Sciatic nerve (tissue), 2 donors: ENCODE measurements at regions of chr2 and their contacts with region 1.

Region 1: GRCh38 chr2:85635636-85636035 is 19.6 kb downstream of the USP39 start:
- DNase-seq: peak; percentile 10
- ATAC-seq: no peak

Region 2: DNA sequence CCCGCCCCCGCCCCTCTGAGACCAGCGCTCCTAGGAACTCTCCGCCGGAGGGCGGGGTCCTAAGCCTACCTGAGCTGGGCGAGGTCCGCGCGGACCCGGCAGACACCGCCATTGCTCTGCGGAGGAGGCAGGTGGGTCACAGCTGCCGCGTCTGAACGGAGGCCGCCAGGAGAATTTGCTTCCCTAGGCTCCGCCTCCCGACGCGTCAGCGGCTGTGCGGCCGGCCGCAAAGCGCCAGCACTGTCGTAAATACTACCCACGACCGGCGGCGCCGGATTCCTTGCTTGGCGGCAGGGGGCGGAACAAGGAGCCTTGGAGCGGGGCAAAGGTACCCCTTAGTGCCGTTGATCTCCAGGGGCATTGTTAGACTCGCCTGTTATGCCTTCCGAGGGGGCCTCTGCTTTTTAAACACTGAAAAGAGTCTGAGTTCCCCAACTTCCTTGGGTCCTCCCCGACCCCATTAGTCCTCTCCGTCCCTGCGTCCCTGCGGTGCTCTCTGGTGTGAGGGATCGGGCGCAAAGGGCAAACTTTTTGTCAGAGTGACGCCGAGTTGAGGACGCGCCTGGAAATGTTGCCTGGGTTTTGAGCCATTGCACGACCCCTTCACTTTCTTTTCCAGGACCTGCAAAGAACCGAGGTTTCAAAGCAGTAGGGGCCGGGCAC is 74.2 kb before region 1 on chr2 and contains the start of gene GGCX:
- intact Hi-C with region 1: no loop called
- DNase-seq: peak; percentile 98
- ATAC-seq: peak; percentile 97
- total RNA-seq, gene GGCX: 36.6 TPM

Region 3: DNA sequence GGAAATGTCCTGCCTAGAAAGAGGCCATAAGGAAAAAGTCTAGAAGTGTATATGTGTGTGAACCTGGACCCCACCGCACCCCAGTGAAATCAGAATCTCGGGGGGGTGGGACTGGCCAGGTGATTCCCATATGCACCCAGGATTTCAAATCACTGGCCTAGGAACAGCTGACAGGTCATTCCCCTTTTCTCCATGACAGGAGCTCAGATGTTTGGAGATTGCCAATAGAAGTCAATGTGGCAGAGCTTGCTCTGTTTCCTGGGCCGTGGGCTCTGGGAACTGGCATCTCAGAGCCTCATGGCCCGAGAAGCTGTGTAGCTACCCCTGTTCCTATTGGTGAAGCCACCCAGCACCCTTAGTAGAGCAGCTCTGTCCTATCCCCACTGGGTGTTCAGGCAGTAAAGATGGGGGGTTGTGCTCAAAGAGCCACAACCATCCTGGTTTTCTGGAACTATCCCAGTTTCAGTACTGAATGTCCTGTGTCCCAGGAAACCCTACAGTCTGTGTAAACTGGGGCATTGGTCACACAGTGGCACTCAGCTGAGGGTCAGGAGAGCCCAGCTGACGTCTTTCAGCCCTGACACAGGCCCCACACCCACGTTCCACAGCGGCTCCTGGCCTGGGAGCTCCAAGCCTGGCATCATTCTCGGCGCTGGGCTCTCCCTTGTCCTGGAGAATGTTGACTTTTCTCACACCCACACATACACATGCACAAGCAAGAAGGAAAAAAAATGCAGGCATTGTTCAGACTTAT is 77.4 kb after region 1 on chr2:
- intact Hi-C with region 1: loop called (anchors 10 kb)
- DNase-seq: no peak
- ATAC-seq: peak; percentile 70

Region 4: DNA sequence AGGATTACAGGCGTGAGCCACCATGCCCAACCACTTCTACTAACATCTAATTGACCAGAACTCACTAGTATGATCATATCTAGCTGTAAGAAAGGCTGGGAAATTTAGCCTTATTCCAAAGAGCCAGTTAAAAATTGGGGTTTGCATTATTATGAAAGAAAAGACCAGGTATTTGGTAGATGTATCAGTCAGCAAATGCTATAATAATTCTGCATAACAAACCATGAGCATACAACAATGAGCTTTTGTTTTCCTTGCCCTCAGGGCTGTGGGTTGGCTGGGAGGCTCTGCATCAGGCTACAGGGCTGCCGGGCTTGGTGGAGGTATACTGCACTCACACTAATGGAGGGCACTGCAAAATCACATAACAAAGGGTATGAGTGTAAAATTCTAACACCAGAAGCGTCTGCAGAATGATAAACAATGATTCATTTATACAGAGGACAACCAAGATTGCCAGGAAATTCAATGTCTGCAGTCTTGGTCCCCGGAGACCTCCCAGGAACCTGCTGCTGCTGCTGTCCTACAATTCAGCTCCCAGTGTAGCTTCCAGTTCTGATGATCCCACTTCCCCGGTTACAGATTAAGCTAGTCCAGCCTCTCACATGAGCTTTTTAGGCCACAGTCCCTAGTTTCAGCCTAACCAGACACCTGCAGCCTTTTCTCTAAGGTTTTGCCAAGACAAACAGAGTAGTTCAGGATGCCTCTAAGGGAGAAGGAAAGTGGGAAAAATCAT is 285.3 kb after region 1 on chr2:
- intact Hi-C with region 1: no loop called
- DNase-seq: no peak
- ATAC-seq: peak; percentile 44